ENCODE measurements at regions of chr6 and their contacts with region 1.

Region 1: DNA sequence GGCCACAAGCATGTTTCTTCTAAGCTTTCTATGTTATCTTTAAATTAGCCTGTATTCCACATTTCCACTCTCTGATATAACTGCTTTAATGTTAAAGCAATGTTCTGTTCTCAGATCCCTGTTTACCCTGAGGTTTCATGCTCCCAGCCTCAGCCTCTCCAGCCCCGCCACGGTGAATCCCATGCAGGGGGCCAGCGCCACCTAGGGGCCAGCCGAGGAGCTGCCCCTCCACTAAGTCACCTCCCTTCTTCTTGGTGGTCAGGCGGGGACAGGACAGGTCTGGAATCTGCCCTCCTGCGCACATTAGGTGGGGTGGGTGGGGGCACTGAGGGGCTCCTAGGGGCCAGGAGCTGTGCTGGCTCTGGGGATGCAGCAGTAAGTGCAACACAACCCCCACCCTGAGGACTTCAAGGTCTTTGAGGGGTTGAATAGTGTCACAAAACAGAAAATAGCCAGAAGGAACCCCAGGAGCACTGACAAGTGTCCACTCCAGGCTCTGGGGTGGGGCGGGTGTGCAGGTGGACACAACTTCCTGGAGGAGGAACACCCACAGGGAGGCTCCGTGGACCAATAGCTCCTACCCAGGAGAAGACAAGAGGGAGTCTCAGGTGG is 61.6 kb downstream of the RAB44 start:
- DNase-seq: peak; percentile 68
- ATAC-seq: peak; percentile 99
- H3K4me3 ChIP-seq: no peak overlapping the region
- H3K27ac ChIP-seq: no peak overlapping the region
- H3K4me1 ChIP-seq: no peaks in the 10 kb centered on the region
- H3K27me3 ChIP-seq: peaks cover 18% of the 10 kb centered on the region
- CTCF ChIP-seq: peak; percentile 98
- POLR2A ChIP-seq: no peak
- RAD21 ChIP-seq: peak; percentile 95

Region 2: DNA sequence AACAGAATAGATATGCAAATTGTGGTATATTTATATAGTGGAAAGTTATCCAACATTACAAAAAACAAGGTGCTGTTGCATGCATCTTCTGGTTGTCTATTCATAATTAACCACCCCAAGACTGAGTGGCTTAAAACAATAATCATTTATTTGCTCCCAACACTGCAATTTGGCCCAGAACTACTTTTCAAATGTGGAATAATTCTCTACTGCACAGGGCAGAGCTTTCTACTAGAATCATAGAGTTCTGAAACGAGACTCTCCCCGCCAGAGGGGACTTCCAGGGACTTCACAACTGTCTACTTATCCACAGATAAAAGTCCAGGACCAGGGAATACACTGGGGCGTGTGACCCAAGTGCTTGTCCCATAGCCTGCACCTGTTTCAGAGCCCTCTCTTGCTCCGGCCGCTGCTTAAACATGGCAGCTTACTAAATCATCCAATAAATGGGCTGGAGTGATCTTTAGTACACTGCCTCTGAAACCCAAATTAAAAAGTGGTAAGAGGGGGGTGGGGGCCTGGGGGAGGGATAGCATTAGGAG is 70.6 kb before region 1 on chr6:
- CTCF ChIA-PET with region 1: no interaction called
- POLR2A ChIA-PET with region 1: no interaction called
- dilution Hi-C with region 1: no loop called
- in situ Hi-C with region 1: no loop called
- intact Hi-C with region 1: loop called (anchors 1 kb)
- DNase-seq: peak; percentile 50
- ATAC-seq: peak; percentile 21
- H3K4me3 ChIP-seq: no peak overlapping the region
- H3K27ac ChIP-seq: no peak overlapping the region
- H3K4me1 ChIP-seq: no peaks in the 10 kb centered on the region
- H3K27me3 ChIP-seq: no peaks in the 10 kb centered on the region; the same call in 1 of the 2 replicates
- CTCF ChIP-seq: no peak
- POLR2A ChIP-seq: no peak
- RAD21 ChIP-seq: no peak